Activated naive CD4-positive, alpha-beta T cell treated with anti-CD3 and anti-CD28 coated beads for 36 hours (primary cell): ENCODE measurements at regions of chr4 and their contacts with region 1.

Region 1: DNA sequence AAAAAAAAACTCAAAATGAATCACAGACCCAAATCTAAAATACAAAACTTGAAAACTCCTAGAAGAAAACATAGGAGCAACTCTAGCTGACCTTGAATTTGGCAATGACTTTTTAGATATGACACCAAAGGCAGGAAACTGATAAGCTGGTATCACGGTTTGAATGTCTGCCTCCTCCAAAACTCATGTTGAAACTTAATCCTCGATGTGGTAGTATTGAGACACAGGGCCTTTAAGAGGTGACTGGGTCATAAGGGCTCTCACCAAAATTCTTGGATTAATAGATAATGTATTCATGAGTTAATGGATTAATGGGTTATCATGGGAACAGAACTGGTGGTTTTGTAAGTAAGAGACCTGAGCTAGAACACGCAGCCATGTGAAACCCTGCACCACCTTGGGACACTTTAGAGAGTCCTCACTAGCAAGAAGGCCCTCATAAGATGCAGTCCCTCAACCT is 40.5 kb downstream of the FRYL start:
- DNase-seq: no peak
- H3K4me3 Mint-ChIP-seq: no peak overlapping the region
- H3K27ac Mint-ChIP-seq: no peak overlapping the region
- H3K4me1 Mint-ChIP-seq: peaks cover 74% of the 10 kb centered on the region
- H3K27me3 Mint-ChIP-seq: no peaks in the 10 kb centered on the region

Region 2: GRCh38 chr4:48704091-48704801 is 35.3 kb before region 1 on chr4:
- CTCF ChIA-PET with region 1: interaction called, 3 read pairs
- intact Hi-C with region 1: loop called (anchors 5 kb)
- DNase-seq: no peak
- H3K4me3 Mint-ChIP-seq: no peak overlapping the region
- H3K27ac Mint-ChIP-seq: no peak overlapping the region
- H3K4me1 Mint-ChIP-seq: peaks cover 37% of the 10 kb centered on the region
- H3K27me3 Mint-ChIP-seq: no peaks in the 10 kb centered on the region

Region 3: DNA sequence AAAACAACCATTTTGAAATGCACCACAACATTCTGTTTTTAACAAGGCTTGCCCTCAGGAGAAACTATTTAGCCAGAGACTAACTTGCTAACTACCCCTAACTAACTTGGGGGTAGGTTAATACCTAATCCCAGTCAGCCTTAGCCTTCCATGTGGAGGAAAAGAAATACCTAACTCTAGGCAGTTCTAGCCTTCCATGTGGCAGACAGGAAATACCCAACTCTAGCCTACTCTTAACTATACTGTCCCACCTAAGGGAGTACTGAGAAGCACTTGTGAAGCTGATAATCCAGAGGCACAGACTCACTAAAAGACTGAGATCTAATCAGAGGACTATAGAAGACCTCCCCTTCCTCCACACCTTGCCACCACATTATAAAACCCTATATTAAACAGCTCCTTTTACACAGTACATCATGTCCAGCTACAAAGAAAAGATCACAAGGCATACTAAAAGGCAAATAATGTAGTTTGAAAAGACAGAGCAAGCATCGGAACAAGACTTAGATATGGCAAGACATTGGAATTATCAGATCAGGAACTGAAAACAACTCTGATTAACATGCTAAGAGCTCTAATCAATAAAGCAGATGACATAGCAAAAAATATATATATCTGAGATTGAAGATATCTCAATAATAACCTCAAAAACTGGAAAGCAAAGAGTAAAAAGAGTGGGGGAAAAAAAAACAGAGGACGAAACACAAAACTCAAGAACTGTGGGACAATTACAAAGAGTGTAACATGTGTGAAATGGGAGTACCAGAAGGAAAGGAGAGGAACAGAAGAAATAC is 11.7 kb before region 1 on chr4:
- CTCF ChIA-PET with region 1: no interaction called
- intact Hi-C with region 1: loop called (anchors 1 kb)
- DNase-seq: no peak
- H3K4me3 Mint-ChIP-seq: no peak overlapping the region
- H3K27ac Mint-ChIP-seq: no peak overlapping the region
- H3K4me1 Mint-ChIP-seq: peaks cover 87% of the 10 kb centered on the region
- H3K27me3 Mint-ChIP-seq: no peaks in the 10 kb centered on the region

Region 4: DNA sequence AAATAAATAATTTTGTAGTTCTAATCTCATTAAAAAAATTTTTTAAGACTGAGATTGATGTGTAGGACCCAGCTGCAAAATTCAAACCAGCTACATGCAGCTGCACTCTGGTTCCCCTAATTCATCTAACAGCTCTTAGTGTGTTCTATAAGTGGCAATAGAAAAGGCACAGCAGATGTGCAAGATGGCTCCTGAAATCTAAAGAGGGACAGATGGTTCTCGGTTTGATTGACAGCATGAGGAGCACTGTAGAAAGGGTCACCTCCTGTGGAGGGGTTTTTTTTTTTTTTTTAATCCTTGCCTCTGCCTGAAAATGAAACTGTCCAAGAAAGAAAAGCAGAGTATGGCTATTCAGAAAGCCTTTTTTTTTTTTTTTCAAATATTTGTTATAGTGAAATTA is 74.4 kb after region 1 on chr4:
- CTCF ChIA-PET with region 1: no interaction called
- intact Hi-C with region 1: no loop called
- DNase-seq: no peak
- H3K4me3 Mint-ChIP-seq: no peak overlapping the region
- H3K27ac Mint-ChIP-seq: no peak overlapping the region
- H3K4me1 Mint-ChIP-seq: peaks cover 5% of the 10 kb centered on the region
- H3K27me3 Mint-ChIP-seq: no peaks in the 10 kb centered on the region